Transverse colon (tissue), 4 donors: ENCODE measurements at regions of chr7 and their contacts with region 1.

Region 1: GRCh38 chr7:71961283-71961682 is 450.9 kb downstream of the CALN1 start:
- DNase-seq: no peak
- H3K4me3 ChIP-seq: no peak overlapping the region
- H3K27ac ChIP-seq: no peak overlapping the region
- H3K4me1 ChIP-seq: no peaks in the 10 kb centered on the region
- H3K27me3 ChIP-seq: no peaks in the 10 kb centered on the region
- CTCF ChIP-seq: no peak
- EP300 ChIP-seq: no peak
- POLR2A ChIP-seq: no peak

Region 2: GRCh38 chr7:70719125-70719524 is 1242.2 kb before region 1 on chr7:
- in situ Hi-C with region 1: no loop called
- intact Hi-C with region 1: loop called (anchors 5 kb)
- DNase-seq: no peak
- H3K4me3 ChIP-seq: no peak overlapping the region
- H3K27ac ChIP-seq: no peak overlapping the region
- H3K4me1 ChIP-seq: no peaks in the 10 kb centered on the region
- H3K27me3 ChIP-seq: no peaks in the 10 kb centered on the region
- CTCF ChIP-seq: no peak
- EP300 ChIP-seq: no peak
- POLR2A ChIP-seq: no peak